ENCODE measurements at regions of chr5 and their contacts with region 1.

Region 1: GRCh38 chr5:135191084-135191826 is 157.2 kb upstream of the PITX1 start:
- DNase-seq: peak; percentile 85

Region 2: GRCh38 chr5:134917070-134917815 is 274.0 kb before region 1 on chr5:
- CTCF ChIA-PET with region 1: interaction called, 12 read pairs
- POLR2A ChIA-PET with region 1: no interaction called
- DNase-seq: peak; percentile 18